ENCODE measurements at regions of chr5 and their contacts with region 1.

Region 1: GRCh38 chr5:147410496-147411355 is 99.1 kb downstream of the DPYSL3 start:
- DNase-seq: no peak
- ATAC-seq: no peak
- H3K4me3 ChIP-seq: no peak overlapping the region
- H3K27ac ChIP-seq: no peak overlapping the region
- H3K4me1 ChIP-seq: no peaks in the 10 kb centered on the region
- H3K27me3 ChIP-seq: peaks cover 2% of the 10 kb centered on the region; the same call in 1 of the 2 replicates
- CTCF ChIP-seq: no peak

Region 2: GRCh38 chr5:147216552-147217154 is 194.1 kb before region 1 on chr5:
- CTCF ChIA-PET with region 1: no interaction called
- POLR2A ChIA-PET with region 1: no interaction called
- in situ Hi-C with region 1: no loop called
- intact Hi-C with region 1: no loop called
- DNase-seq: no peak
- ATAC-seq: no peak
- H3K4me3 ChIP-seq: no peak overlapping the region
- H3K27ac ChIP-seq: no peak overlapping the region
- H3K4me1 ChIP-seq: no peaks in the 10 kb centered on the region
- H3K27me3 ChIP-seq: no peaks in the 10 kb centered on the region
- CTCF ChIP-seq: no peak

Region 3: GRCh38 chr5:147427521-147428401 is 17.0 kb after region 1 on chr5:
- CTCF ChIA-PET with region 1: no interaction called
- POLR2A ChIA-PET with region 1: no interaction called
- in situ Hi-C with region 1: no loop called
- intact Hi-C with region 1: loop called (anchors 1 kb)
- DNase-seq: no peak
- ATAC-seq: no peak
- H3K4me3 ChIP-seq: no peak overlapping the region
- H3K27ac ChIP-seq: no peak overlapping the region
- H3K4me1 ChIP-seq: no peaks in the 10 kb centered on the region
- H3K27me3 ChIP-seq: no peaks in the 10 kb centered on the region
- CTCF ChIP-seq: no peak

Region 4: DNA sequence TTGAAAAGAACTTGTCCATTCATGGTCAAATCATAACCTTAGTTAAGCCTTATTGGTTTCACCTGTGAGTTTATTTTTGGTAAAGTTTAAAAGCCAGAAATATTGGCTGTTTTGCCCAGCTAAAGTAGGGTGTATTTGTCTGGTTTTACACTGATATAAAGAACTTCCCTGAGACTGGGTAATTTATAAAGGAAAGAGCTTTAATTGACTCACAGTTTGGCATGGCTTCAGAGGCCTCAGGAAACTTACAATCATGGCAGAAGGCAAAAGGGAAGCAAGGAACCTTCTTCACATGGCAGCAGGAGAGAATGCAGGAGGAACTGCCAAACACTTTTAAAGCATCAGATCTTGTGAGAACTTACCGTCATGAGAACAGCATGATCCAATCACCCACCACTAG is 316.5 kb after region 1 on chr5:
- CTCF ChIA-PET with region 1: no interaction called
- POLR2A ChIA-PET with region 1: no interaction called
- in situ Hi-C with region 1: no loop called
- intact Hi-C with region 1: no loop called
- DNase-seq: no peak
- ATAC-seq: no peak
- H3K4me3 ChIP-seq: no peak overlapping the region
- H3K27ac ChIP-seq: no peak overlapping the region
- H3K4me1 ChIP-seq: no peaks in the 10 kb centered on the region
- H3K27me3 ChIP-seq: no peaks in the 10 kb centered on the region
- CTCF ChIP-seq: no peak